ENCODE measurements at regions of chr19 and their contacts with region 1.

Region 1: DNA sequence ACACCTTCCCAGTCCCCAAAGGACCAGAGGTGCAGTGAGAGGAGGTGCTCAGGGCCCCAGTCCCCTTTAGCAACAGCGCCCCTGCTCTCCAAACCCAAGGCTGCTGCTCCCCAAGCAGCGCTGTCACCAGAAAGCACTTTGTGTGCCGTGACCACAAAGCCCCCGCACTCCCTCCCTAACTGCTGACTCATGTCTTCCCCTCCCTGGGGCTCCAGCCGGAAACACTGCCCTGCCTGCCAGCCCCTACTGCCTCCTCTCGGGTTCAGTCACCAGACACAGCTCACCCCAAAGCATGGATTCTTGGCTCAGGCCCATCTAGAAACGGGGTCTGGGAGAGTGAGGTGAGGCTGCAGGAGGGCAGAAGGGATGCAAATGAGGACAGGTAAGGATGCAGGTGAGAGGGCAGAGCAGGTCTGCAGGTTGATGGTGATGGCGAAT is 4.9 kb upstream of the TNFSF14 start:
- DNase-seq: peak; percentile 90
- H3K4me3 Mint-ChIP-seq: peak overlapping the region; percentile 72
- H3K27ac Mint-ChIP-seq: peak overlapping the region; percentile 89
- H3K4me1 Mint-ChIP-seq: peaks cover 61% of the 10 kb centered on the region
- H3K27me3 Mint-ChIP-seq: no peaks in the 10 kb centered on the region

Region 2: DNA sequence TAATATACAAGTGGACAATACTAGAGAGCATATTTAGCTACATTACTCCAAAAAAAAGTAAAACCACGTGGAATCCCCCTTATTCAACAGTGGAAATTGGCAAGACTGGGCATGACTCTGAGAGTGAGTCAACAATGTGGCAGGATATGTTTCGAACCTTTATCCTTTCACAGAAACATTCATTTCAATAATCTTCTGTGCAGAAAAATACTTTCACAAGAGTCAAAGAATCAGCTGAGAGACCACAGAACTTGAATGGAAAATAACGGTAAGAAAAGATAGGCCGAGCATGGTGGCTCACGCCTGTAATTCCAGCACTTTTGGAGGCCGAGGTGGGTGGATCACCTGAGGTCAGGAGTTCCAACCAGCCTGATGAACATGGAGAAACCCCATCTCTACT is 58.9 kb before region 1 on chr19:
- intact Hi-C with region 1: loop called (anchors 2 kb)
- DNase-seq: no peak
- H3K4me3 Mint-ChIP-seq: no peak overlapping the region
- H3K27ac Mint-ChIP-seq: peak overlapping the region; percentile 66
- H3K4me1 Mint-ChIP-seq: peaks cover 31% of the 10 kb centered on the region
- H3K27me3 Mint-ChIP-seq: peaks cover 10% of the 10 kb centered on the region

Region 3: DNA sequence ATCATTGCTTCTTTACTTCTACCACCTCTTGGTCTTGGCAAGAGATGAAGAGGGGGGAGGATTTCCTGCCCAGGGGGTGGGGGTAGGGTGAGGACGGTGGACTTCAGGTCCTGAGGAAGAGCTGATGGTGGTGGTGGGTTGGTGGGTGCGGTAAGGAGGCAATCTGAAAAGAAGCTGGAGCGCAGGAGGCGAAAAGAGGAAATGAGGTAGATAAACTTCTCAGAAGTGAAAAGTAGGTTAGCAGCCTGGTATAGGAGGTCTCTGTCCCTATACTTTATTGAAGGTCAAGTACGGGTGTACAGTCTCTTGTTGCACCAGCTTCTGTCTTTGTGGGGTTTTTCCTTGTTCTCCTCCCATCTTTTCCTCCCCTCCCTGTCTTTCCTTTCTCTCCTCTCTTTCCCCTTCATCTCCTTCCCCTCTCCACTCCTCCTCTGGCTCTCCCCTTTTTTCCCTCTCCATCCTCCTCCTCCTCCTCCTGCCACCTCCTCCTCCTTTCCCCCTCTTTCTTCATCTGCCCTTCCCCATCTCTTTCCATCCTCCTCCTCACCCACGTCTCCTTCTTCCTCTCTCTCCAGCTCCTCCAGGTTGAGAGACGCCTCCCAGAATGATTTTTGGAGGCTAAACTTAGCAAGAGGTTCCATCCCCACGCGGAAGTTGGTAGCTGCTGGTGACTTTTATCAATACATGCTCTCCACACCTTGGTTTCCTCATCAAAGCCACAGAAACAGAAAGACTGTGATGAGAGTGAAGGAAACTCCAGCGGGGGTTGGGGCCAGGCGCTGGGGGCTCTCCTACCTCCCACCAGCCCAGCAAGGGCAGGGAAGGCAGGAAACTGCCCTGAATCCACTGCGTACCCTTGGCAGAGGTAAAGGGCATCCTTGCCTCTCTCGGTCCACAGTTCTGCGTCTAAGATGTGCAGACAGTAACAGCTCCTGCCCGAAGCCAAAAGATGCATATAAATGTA is 20.3 kb before region 1 on chr19:
- intact Hi-C with region 1: loop called (anchors 1 kb)
- DNase-seq: peak; percentile 52
- H3K4me3 Mint-ChIP-seq: peak overlapping the region; percentile 76
- H3K27ac Mint-ChIP-seq: peak overlapping the region; percentile 99
- H3K4me1 Mint-ChIP-seq: peaks cover 63% of the 10 kb centered on the region
- H3K27me3 Mint-ChIP-seq: no peaks in the 10 kb centered on the region

Region 4: GRCh38 chr19:6687117-6687516 is 12.2 kb after region 1 on chr19:
- intact Hi-C with region 1: loop called (anchors 1 kb)
- DNase-seq: no peak
- H3K4me3 Mint-ChIP-seq: no peak overlapping the region
- H3K27ac Mint-ChIP-seq: peak overlapping the region; percentile 18
- H3K4me1 Mint-ChIP-seq: peaks cover 38% of the 10 kb centered on the region
- H3K27me3 Mint-ChIP-seq: no peaks in the 10 kb centered on the region

Region 5: DNA sequence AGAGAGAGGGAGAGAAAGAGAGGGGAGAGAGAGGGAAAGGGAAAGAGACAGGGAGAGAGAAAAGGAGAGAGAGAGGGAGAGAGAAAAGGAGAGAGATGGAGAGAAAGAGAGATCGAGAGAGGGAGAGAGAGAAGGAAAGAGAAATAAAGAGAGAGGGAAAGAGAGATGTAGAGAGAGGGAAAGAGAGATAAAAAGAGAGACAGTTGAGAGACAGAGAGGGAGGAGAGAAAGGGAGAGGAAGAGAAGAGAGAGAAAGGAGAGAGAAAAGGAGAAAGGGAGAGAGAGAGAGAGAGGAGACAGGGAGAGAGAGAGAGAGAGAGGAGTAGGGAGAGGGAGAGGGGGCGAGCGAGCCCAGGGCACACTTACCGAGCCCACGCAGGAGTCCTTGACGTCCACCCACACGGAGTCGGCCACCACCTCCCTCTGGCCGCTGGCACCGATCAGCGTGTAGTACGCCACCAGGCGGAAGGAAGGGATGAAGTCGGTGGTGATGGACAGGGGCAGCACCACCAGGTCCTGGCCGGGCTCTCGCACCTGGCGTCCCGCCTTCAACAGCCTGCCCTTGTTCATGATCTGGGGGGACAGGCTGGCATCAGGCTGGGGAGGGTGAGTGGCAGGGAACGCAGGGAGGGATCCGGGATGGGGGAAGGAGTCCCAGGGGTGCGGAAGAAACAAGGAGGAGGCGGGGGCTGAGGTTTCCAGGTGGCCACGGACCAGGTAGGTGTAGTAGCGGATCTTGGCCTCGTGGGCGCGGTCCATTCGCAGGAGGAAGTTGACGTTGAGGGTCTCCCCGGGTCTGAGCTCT is 35.6 kb after region 1 on chr19:
- intact Hi-C with region 1: no loop called
- DNase-seq: no peak
- H3K4me3 Mint-ChIP-seq: no peak overlapping the region
- H3K27ac Mint-ChIP-seq: no peak overlapping the region
- H3K4me1 Mint-ChIP-seq: peaks cover 3% of the 10 kb centered on the region
- H3K27me3 Mint-ChIP-seq: peaks cover 30% of the 10 kb centered on the region

Region 6: DNA sequence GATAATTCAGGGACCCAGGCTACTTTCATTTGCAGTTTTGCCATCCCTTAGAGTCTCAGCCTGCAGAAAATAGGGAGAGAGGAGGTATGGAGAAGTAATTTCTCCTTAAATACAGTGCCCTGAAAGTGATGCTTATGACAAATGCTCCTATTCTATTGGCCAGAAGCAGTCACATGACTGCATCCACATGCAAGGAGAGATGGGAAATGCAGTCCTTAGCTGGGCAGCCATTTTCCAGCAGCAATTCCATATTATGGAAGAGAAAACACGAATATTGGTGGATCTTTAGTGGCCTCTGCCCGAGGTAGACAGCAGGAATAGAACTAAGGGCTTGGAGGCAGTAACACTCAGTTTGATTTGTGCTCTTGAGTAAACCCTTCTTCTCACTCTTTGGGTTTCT is 137.0 kb after region 1 on chr19:
- intact Hi-C with region 1: loop called (anchors 5 kb)
- DNase-seq: no peak
- H3K4me3 Mint-ChIP-seq: no peak overlapping the region
- H3K27ac Mint-ChIP-seq: no peak overlapping the region
- H3K4me1 Mint-ChIP-seq: peaks cover 37% of the 10 kb centered on the region
- H3K27me3 Mint-ChIP-seq: no peaks in the 10 kb centered on the region

Measured in activated T-helper 2 cell treated with anti-CD3 and anti-CD28 coated beads, Interferon-gamma antibody, Interleukin-2, Interleukin-4, amounts not matched to agents 10 μg/mL and 5 μg/mL and 100 μg/mL, durations not matched to agents 14 hours and 24 hours and 36 hours (primary cell).